KBM-7 (cell line): ENCODE measurements at regions of chr3 and their contacts with region 1.

Region 1: DNA sequence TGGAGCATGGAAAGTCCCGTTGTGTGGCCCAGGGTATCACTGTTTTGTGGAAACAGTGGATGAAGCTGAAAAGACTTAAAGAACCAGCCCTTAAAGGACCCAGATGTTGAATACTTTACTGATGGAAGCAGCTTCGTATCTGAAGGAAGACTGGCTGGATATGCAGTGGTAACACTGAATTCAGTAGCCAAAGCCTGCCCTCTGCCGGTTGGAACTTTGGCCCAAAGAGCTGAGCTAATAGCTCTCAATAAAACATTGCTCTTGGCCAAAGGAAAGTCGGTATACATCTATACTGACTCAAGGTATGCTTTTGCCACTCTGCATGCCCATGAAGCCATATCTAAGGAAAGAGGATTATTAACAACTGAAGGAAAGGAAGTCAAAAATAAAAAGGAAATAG is 885.4 kb downstream of the PDCD6IP start:
- DNase-seq: peak; percentile 63

Region 2: GRCh38 chr3:33915791-33916546 is 767.9 kb before region 1 on chr3:
- in situ Hi-C with region 1: loop called (anchors 25 kb)
- DNase-seq: peak; percentile 65